ENCODE measurements at regions of chr11 and their contacts with region 1.

Region 1: DNA sequence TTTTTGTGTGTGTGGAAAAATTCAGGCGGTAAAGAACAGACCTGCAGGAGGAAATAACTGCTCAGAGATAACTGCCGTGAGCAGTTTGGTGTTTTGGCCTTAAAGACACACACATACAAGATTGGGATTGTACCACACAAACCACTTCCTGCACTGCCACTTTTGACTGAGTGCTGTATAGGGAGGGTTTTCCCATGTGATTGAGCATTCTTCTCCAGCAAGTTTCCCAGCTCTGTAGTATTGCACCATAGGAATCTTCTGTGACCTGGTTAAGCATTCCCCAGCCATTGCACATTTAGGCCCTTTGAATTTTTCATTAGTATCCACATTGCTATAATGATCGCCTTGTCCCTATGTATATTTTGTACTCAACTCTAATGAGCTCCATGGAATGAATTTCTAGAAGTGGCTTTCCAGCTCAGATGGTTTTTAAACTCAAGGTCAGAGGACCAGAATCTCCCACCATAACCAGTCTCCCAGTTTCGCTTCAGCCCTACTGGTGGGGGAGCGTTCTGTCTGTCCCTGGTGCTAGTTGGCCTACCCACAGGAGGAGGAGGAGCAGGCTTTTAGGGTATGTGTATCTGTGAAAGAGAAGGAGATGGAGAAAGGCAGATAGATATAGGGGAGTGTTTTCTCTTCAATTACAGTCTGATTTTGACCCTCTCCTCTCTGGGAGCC is 9.3 kb downstream of the CD82 start:
- DNase-seq: peak; percentile 88
- H3K4me3 Mint-ChIP-seq: peak overlapping the region; percentile 80
- H3K27ac Mint-ChIP-seq: peak overlapping the region; percentile 95
- H3K4me1 Mint-ChIP-seq: peaks cover 89% of the 10 kb centered on the region
- H3K27me3 Mint-ChIP-seq: no peaks in the 10 kb centered on the region

Region 2: GRCh38 chr11:44530413-44531115 is 44.2 kb before region 1 on chr11:
- intact Hi-C with region 1: loop called (anchors 1 kb)
- DNase-seq: peak; percentile 87
- H3K4me3 Mint-ChIP-seq: peak overlapping the region; percentile 67
- H3K27ac Mint-ChIP-seq: peak overlapping the region; percentile 91
- H3K4me1 Mint-ChIP-seq: peaks cover 33% of the 10 kb centered on the region
- H3K27me3 Mint-ChIP-seq: no peaks in the 10 kb centered on the region

Region 3: GRCh38 chr11:44596525-44597276 is 22.0 kb after region 1 on chr11:
- intact Hi-C with region 1: loop called (anchors 1 kb)
- DNase-seq: peak; percentile 96
- H3K4me3 Mint-ChIP-seq: peak overlapping the region; percentile 75
- H3K27ac Mint-ChIP-seq: peak overlapping the region; percentile 96
- H3K4me1 Mint-ChIP-seq: peaks cover 79% of the 10 kb centered on the region
- H3K27me3 Mint-ChIP-seq: no peaks in the 10 kb centered on the region

Region 4: DNA sequence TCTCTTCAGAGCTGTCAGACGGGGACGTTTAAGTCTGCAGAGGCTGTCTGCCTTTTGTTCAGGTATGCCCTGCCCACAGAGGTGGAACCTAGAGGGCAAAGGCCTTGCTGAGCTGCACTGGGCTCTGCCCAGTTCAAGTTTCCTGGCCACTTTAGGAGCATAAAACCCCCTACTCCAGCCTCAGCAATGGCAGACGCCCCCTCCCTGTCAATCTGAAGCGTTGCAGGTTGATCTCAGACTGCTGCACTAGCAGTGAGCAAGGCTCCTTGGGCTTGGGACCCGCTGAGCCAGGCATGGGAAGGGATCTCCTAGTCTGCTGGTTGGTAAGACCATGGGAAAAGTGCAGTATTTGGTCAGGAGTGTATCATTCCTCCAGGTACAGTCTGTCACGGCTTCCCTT is 442.6 kb after region 1 on chr11:
- intact Hi-C with region 1: no loop called
- DNase-seq: no peak
- H3K4me3 Mint-ChIP-seq: no peak overlapping the region
- H3K27ac Mint-ChIP-seq: no peak overlapping the region
- H3K4me1 Mint-ChIP-seq: peaks cover 5% of the 10 kb centered on the region
- H3K27me3 Mint-ChIP-seq: peaks cover 33% of the 10 kb centered on the region

Region 5: GRCh38 chr11:45147017-45147728 is 572.4 kb after region 1 on chr11:
- intact Hi-C with region 1: loop called (anchors 10 kb)
- DNase-seq: peak; percentile 98
- H3K4me3 Mint-ChIP-seq: peak overlapping the region; percentile 82
- H3K27ac Mint-ChIP-seq: peak overlapping the region; percentile 83
- H3K4me1 Mint-ChIP-seq: peaks cover 12% of the 10 kb centered on the region
- H3K27me3 Mint-ChIP-seq: peaks cover 44% of the 10 kb centered on the region